Sciatic nerve (tissue), 2 donors: ENCODE measurements at regions of chr4 and their contacts with region 1.

Region 1: GRCh38 chr4:123785538-123785937 is 388.9 kb downstream of the SPRY1 start:
- DNase-seq: peak; percentile 71
- ATAC-seq: peak; percentile 94

Region 2: GRCh38 chr4:123806056-123806455 is 20.5 kb after region 1 on chr4:
- intact Hi-C with region 1: loop called (anchors 2 kb)
- DNase-seq: no peak
- ATAC-seq: no peak